Naive thymus-derived CD4-positive, alpha-beta T cell (primary cell): ENCODE measurements at regions of chr2 and their contacts with region 1.

Region 1: DNA sequence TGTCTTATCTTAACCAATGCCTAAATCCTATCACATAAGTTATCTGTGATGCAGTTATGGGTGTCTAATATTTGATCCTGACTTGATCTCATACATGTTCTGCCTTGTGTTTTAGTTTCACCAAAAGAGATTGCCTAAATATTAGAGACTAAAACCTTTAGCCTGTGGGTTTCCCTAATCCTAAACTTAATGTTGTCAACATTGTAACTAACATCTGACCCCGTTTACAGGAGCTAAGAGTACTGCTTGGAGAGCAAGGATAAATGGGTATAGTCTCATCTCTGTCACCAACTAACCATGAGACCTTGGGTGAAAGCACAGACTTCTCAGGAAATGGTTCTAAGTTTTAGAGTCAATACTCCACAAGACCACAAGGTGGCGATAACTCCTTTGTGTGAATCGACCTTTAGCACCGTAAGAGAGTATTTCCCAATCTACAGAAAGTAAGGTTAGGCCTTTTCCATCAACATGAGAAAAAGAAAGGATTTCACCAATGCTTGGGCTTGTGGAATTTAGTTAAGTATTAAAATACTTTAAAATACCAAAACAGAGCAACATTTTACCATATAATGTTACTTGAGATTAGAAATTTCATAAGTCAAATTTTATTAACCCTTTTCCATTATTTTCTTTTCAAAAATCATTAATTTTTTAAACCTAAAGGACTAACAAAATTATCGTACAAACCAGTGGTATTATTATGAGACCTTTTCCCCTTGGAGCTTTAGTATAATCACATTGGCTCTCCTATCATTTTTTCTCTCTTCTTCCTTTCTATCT is 60.5 kb downstream of the G6PC2 start:
- DNase-seq: peak in 7 of 9 donors; percentile 20 to 60 (median 56)
- ATAC-seq: peak; percentile 91
- H3K4me3 ChIP-seq: no peak overlapping the region
- H3K4me3 Mint-ChIP-seq: no peak overlapping the region
- H3K27ac ChIP-seq: no peak overlapping the region
- H3K27ac Mint-ChIP-seq: no peak overlapping the region
- H3K4me1 ChIP-seq: peaks cover 14 to 32% of the 10 kb centered on the region in 2 donors
- H3K4me1 Mint-ChIP-seq: peaks cover 6 to 25% (median 20%) of the 10 kb centered on the region in 7 donors
- H3K27me3 ChIP-seq: no peaks in the 10 kb centered on the region
- H3K27me3 Mint-ChIP-seq: peaks cover 0 to 13% (median 10%) of the 10 kb centered on the region in 5 donors

Region 2: GRCh38 chr2:169131587-169132512 is 170.2 kb after region 1 on chr2:
- CTCF ChIA-PET with region 1: interaction called, 15 read pairs
- POLR2A ChIA-PET with region 1: no interaction called
- intact Hi-C with region 1: loop called (anchors 1 kb)
- DNase-seq: peak in 7 of 9 donors; percentile 11 to 50 (median 40)
- ATAC-seq: peak; percentile 92
- H3K4me3 ChIP-seq: no peak overlapping the region
- H3K4me3 Mint-ChIP-seq: no peak overlapping the region
- H3K27ac ChIP-seq: no peak overlapping the region
- H3K27ac Mint-ChIP-seq: no peak overlapping the region
- H3K4me1 ChIP-seq: no peaks in the 10 kb centered on the region
- H3K4me1 Mint-ChIP-seq: peaks cover 0 to 7% (median 0%) of the 10 kb centered on the region in 7 donors
- H3K27me3 ChIP-seq: no peaks in the 10 kb centered on the region
- H3K27me3 Mint-ChIP-seq: no peaks in the 10 kb centered on the region

Region 3: GRCh38 chr2:169141713-169142352 is 180.2 kb after region 1 on chr2:
- CTCF ChIA-PET with region 1: interaction called, 5 read pairs
- POLR2A ChIA-PET with region 1: no interaction called
- intact Hi-C with region 1: loop called (anchors 1 kb)
- DNase-seq: peak; percentile 21 to 65 (median 49)
- ATAC-seq: peak; percentile 73
- H3K4me3 ChIP-seq: no peak overlapping the region
- H3K4me3 Mint-ChIP-seq: no peak overlapping the region
- H3K27ac ChIP-seq: no peak overlapping the region
- H3K27ac Mint-ChIP-seq: no peak overlapping the region
- H3K4me1 ChIP-seq: no peaks in the 10 kb centered on the region
- H3K4me1 Mint-ChIP-seq: peaks cover 0 to 1% (median 0%) of the 10 kb centered on the region in 7 donors
- H3K27me3 ChIP-seq: no peaks in the 10 kb centered on the region
- H3K27me3 Mint-ChIP-seq: peaks cover 0 to 3% (median 0%) of the 10 kb centered on the region in 5 donors

Region 4: DNA sequence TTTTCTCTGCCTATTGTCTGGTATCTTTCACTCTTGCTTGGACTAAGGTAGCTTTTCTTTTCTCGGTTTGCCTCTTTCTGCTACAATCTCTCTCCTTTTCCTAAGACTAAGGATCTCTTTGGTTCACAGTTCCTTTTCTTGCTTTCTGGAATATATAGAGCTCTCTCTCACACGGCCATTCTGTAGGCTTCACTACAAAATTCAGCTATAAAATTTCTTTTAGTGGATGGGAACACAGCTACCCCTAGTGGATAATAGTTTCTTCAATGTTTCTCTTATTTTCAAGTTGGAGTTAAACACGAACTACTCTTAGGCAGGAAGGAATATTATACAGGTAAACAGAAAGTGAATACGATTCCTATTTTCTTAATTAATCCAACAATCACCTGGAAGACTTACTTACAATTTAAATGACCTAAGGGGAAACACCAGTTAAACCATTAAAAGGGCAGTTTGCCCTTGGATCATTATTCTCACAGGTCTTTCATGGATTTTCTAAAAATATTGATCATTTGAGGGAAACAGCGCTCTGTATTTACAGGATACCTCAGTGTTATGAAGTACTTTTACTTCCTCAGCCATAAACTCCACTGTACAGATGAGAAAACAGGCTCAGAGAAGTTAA is 260.2 kb after region 1 on chr2:
- CTCF ChIA-PET with region 1: no interaction called
- POLR2A ChIA-PET with region 1: no interaction called
- intact Hi-C with region 1: loop called in 1 of 2 experiments (anchors 5 kb)
- DNase-seq: peak in 1 of 9 donors; percentile 2
- ATAC-seq: no peak
- H3K4me3 ChIP-seq: no peak overlapping the region
- H3K4me3 Mint-ChIP-seq: no peak overlapping the region
- H3K27ac ChIP-seq: no peak overlapping the region
- H3K27ac Mint-ChIP-seq: no peak overlapping the region
- H3K4me1 ChIP-seq: peaks cover 0 to 5% of the 10 kb centered on the region in 2 donors
- H3K4me1 Mint-ChIP-seq: peaks cover 0 to 3% (median 0%) of the 10 kb centered on the region in 7 donors
- H3K27me3 ChIP-seq: no peaks in the 10 kb centered on the region
- H3K27me3 Mint-ChIP-seq: peaks cover 0 to 7% (median 0%) of the 10 kb centered on the region in 5 donors

Region 5: GRCh38 chr2:169397697-169398096 is 436.1 kb after region 1 on chr2:
- CTCF ChIA-PET with region 1: no interaction called
- POLR2A ChIA-PET with region 1: no interaction called
- intact Hi-C with region 1: loop called in 1 of 2 experiments (anchors 5 kb)
- DNase-seq: no peak
- ATAC-seq: no peak
- H3K4me3 ChIP-seq: no peak overlapping the region
- H3K4me3 Mint-ChIP-seq: no peak overlapping the region
- H3K27ac ChIP-seq: no peak overlapping the region
- H3K27ac Mint-ChIP-seq: no peak overlapping the region
- H3K4me1 ChIP-seq: no peaks in the 10 kb centered on the region
- H3K4me1 Mint-ChIP-seq: peaks cover 0 to 3% (median 0%) of the 10 kb centered on the region in 7 donors
- H3K27me3 ChIP-seq: no peaks in the 10 kb centered on the region
- H3K27me3 Mint-ChIP-seq: peaks cover 17 to 27% (median 20%) of the 10 kb centered on the region in 5 donors

Region 6: DNA sequence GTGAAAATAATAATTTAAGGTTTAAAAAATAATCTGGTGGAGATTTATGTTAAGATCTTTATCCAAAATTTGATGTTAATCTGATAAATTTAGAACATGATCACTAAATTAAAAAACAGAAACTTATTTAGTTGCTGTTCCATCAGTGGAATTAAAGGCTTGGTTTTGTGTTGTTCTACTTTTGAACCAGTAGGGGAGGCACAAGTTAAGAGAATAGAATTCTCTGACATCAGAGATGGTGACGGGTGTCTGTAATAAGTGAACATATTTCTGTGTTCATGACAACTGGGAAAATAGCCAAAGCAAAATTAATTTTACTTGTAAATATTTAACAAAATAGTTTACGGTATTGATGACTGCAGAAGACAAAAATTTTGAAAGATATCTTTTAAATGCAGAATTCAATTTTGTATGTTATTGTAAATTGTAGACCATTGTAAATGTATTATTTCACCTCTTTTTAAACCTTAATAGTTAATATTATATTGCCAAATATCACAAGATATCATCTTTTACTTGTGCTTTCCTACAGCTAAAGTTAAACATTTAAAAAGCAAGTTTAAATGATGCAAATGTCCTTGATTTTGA is 971.6 kb after region 1 on chr2:
- CTCF ChIA-PET with region 1: no interaction called
- POLR2A ChIA-PET with region 1: no interaction called
- intact Hi-C with region 1: loop called in 1 of 2 experiments (anchors 5 kb)
- DNase-seq: peak in 2 of 9 donors; percentile 6 to 9
- ATAC-seq: no peak
- H3K4me3 ChIP-seq: no peak overlapping the region
- H3K4me3 Mint-ChIP-seq: no peak overlapping the region
- H3K27ac ChIP-seq: no peak overlapping the region
- H3K27ac Mint-ChIP-seq: no peak overlapping the region
- H3K4me1 ChIP-seq: no peaks in the 10 kb centered on the region
- H3K4me1 Mint-ChIP-seq: peaks cover 0 to 9% (median 0%) of the 10 kb centered on the region in 7 donors
- H3K27me3 ChIP-seq: no peaks in the 10 kb centered on the region
- H3K27me3 Mint-ChIP-seq: no peaks in the 10 kb centered on the region

Region 7: DNA sequence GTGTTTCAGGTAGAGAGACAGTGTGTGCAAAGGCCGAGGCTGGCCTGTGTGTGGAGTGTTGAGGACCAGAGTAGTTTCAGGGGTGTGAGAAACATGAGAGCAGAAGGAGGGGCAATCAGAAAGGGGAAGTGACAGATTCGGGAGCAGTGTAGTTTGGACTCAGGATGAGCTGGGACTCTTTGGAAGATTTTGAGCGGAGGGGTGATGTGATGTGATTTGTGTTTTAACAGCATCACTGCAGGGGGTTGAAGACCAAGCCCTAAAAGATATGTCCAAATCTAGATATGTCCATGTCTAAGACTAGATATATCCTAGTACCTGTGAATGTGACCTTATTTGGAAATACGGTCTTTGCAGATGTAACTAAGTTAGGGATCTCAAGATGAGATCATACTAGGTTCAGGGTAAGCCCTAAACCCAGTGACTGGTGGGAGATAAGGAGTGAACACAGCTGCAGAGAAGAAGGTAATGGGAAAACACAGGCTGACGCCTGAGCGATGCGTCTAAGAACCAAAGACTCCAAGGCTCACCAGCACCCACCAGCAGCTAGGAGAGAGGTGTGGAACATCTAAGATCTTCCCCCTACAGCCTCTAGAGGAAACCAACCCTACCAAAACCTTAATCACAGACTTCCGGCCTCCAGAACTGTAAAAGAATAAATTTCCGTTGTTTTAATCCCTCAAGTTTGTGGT is 1177.8 kb after region 1 on chr2:
- CTCF ChIA-PET with region 1: no interaction called
- POLR2A ChIA-PET with region 1: no interaction called
- intact Hi-C with region 1: no loop called
- DNase-seq: no peak
- ATAC-seq: no peak
- H3K4me3 ChIP-seq: no peak overlapping the region
- H3K4me3 Mint-ChIP-seq: no peak overlapping the region
- H3K27ac ChIP-seq: no peak overlapping the region
- H3K27ac Mint-ChIP-seq: peak overlapping the region in 1 of 9 donors; percentile 19
- H3K4me1 ChIP-seq: no peaks in the 10 kb centered on the region
- H3K4me1 Mint-ChIP-seq: peaks cover 0 to 11% (median 3%) of the 10 kb centered on the region in 7 donors
- H3K27me3 ChIP-seq: no peaks in the 10 kb centered on the region
- H3K27me3 Mint-ChIP-seq: peaks cover 0 to 6% (median 0%) of the 10 kb centered on the region in 5 donors